Colonic mucosa (tissue), 4 donors: ENCODE measurements at regions of chr16 and their contacts with region 1.

Region 1: DNA sequence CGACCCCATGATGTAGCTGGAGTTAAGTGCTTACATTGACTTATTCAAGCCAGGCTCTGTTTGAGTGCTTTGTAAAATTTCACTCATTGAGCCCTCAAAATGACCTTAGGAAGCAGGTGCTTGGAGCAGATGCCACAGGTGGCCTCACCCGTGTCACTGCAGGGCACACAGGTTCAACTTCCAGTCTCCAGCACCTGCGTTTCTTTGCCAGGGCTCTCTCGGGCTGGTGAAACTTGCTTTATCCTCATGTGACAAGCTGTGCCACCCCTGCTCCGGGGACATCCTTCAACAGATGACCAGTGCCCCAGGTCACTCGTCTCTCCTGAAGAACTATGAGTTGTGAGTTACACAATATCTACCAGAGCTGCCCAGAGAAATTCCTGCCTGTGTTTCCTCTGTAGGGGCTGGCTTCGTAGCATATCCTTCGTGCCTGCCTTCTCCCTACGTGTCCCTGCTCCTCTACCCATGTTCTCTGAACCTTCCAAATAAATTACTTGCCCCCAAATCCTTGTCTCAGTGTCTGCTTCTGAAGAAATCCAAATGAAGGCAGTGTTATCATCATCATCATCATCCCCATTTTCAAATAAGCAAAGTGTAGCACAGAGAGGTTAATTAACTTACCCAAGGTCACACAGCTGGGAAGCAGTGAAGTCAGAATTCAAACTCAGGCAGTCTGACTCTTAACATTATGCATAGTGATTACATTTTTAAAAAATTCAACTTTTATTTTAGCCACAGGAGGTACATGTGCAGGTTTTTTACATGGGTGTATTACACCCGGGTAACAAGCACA is 352.5 kb downstream of the NPIPA8 start:
- DNase-seq: no peak
- H3K4me3 ChIP-seq: no peak overlapping the region
- H3K27ac ChIP-seq: no peak overlapping the region
- H3K4me1 ChIP-seq: no peaks in the 10 kb centered on the region
- H3K27me3 ChIP-seq: no peaks in the 10 kb centered on the region
- CTCF ChIP-seq: no peak

Region 2: DNA sequence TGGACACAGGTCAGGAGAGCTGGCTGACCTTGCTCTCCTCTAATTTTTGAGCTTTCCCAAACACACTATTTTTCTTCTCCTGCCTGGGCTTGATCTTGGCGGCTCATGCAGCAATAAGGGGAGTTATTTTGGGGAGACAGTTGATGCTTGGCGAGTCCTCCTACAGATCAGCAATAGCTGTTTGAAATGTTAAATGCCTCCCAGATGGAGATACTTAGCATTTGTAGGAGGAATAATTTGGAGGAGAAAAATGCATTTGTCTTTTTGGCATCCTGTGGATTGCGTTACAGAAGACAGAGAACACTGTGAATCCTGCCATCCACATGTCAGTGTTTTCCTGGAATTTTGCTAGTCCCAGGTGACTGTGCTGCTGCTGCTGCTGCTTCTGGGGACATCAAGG is 185.3 kb before region 1 on chr16:
- intact Hi-C with region 1: loop called (anchors 10 kb)
- DNase-seq: no peak
- H3K4me3 ChIP-seq: no peak overlapping the region
- H3K27ac ChIP-seq: no peak overlapping the region
- H3K4me1 ChIP-seq: no peaks in the 10 kb centered on the region
- H3K27me3 ChIP-seq: no peaks in the 10 kb centered on the region
- CTCF ChIP-seq: no peak